ENCODE measurements at regions of chr5 and their contacts with region 1.

Region 1: DNA sequence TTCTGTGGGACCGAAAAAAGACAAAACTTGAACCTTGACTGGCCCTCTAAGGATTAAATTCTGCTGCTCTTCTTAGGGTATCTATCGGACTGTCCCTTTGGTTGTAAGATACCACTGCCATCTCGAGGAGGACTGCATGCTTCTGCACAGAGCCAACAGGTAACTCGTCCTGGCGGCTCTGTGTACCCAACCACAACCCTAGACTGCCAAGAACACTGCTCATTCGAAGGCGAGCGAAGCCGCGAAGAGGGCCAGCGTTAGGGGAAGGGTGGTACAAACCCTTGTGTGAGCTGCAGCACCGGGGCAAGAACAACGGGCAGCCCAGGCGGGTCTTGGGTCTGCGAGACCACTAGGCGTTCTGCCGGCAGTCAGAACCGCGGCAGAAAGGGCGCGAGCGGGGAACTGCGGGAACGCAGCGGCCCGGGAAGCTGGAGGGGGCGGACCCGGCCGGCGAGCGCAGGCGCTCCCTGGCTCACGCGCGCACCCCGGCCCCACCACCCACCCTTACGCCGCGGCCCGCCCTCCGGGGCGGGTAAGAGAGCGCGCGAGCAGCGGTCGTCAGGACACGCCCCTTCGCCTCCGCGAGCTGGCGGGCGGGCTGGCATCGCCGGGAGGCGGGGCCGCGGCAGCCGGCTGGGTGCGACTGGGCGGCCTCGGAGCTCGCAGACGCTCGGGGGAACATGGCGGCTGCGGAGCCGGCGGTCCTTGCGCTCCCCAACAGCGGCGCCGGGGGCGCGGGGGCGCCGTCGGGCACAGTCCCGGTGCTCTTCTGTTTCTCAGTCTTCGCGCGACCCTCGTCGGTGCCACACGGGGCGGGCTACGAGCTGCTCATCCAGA is at the start of gene ISOC1:
- DNase-seq: peak; percentile 90 to 95
- H3K4me3 ChIP-seq: peak within 1 kb of the TSS; percentile 100
- H3K4me3 Mint-ChIP-seq: peak within 1 kb of the TSS; percentile 78
- H3K27ac Mint-ChIP-seq: peak within 1 kb of the TSS; percentile 27
- H3K4me1 ChIP-seq: no peaks in the 10 kb centered on the region
- H3K4me1 Mint-ChIP-seq: no peaks in the 10 kb centered on the region
- H3K27me3 ChIP-seq: no peaks in the 10 kb centered on the region
- H3K27me3 Mint-ChIP-seq: peaks cover 11% of the 10 kb centered on the region
- CTCF ChIP-seq: peak in 1 of 2 experiments; percentile 14
- total RNA-seq, gene ISOC1: 29.8 and 33.3 TPM in 2 replicates

Region 2: DNA sequence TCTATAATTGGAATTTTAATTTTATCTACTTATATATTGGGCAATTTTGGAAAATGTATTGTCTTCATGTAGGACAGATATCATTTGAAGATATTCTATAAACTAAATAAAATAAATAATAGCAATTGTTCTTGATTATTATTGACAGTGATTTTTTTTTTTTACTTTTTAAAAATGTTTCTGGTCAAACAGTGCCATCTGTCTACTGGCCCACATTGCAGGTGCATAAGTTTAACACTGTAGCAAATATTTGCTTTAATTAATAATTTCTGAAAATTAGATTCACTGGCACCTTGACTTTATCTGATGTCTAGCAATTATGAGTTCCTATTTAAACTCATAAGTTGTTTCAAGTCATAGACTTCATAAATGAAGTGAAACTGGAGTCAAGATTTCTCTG is 40.9 kb before region 1 on chr5:
- CTCF ChIA-PET with region 1: no interaction called
- POLR2A ChIA-PET with region 1: no interaction called
- intact Hi-C with region 1: loop called (anchors 2 kb)
- DNase-seq: no peak
- H3K4me3 ChIP-seq: no peak overlapping the region
- H3K4me3 Mint-ChIP-seq: no peak overlapping the region
- H3K27ac Mint-ChIP-seq: no peak overlapping the region
- H3K4me1 ChIP-seq: 0 out of 2 replicates have a peak, but pooled peaks cover 3% of the 10 kb centered on the region
- H3K4me1 Mint-ChIP-seq: peaks cover 9% of the 10 kb centered on the region
- H3K27me3 ChIP-seq: no peaks in the 10 kb centered on the region; the same call in 1 of the 2 replicates
- H3K27me3 Mint-ChIP-seq: no peaks in the 10 kb centered on the region
- CTCF ChIP-seq: no peak

Region 3: DNA sequence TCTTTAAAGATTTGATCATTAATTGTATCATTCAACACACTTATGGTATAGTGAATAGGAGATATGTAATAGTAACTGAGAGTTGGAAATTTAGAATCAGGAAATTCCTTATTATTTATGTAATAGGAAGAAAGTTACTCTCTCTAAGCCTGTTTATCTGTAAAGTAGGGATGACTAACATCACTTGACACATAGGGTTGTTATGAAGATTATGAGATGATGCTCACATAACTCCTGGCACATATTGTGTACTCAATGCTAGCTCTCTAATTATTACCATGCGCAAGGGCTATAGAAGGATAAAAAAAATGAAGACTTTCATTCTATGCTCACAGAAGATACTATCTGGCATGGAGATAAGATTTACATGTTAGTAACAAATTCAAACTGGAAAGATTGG is 150.2 kb after region 1 on chr5:
- CTCF ChIA-PET with region 1: no interaction called
- POLR2A ChIA-PET with region 1: no interaction called
- intact Hi-C with region 1: no loop called
- DNase-seq: no peak
- H3K4me3 ChIP-seq: no peak overlapping the region
- H3K4me3 Mint-ChIP-seq: no peak overlapping the region
- H3K27ac Mint-ChIP-seq: no peak overlapping the region
- H3K4me1 ChIP-seq: no peaks in the 10 kb centered on the region
- H3K4me1 Mint-ChIP-seq: no peaks in the 10 kb centered on the region
- H3K27me3 ChIP-seq: no peaks in the 10 kb centered on the region
- H3K27me3 Mint-ChIP-seq: peaks cover 4% of the 10 kb centered on the region
- CTCF ChIP-seq: no peak

Measured in Caco-2 (cell line).